ENCODE measurements at regions of chr21 and their contacts with region 1.

Region 1: GRCh38 chr21:42233067-42233961 is 14.4 kb downstream of the ABCG1 start:
- DNase-seq: peak; percentile 76
- H3K4me3 Mint-ChIP-seq: peak overlapping the region; percentile 73
- H3K27ac Mint-ChIP-seq: peak overlapping the region; percentile 92
- H3K4me1 Mint-ChIP-seq: peaks cover 96% of the 10 kb centered on the region
- H3K27me3 Mint-ChIP-seq: no peaks in the 10 kb centered on the region

Region 2: GRCh38 chr21:42009831-42010523 is 223.3 kb before region 1 on chr21 and contains the start of gene ZBTB21:
- intact Hi-C with region 1: loop called (anchors 2 kb)
- DNase-seq: peak; percentile 98
- H3K4me3 Mint-ChIP-seq: peak within 1 kb of the TSS; percentile 90
- H3K27ac Mint-ChIP-seq: peak within 1 kb of the TSS; percentile 99
- H3K4me1 Mint-ChIP-seq: peaks cover 33% of the 10 kb centered on the region
- H3K27me3 Mint-ChIP-seq: peaks cover 23% of the 10 kb centered on the region
- total RNA-seq, gene ZBTB21: 31.8 and 33.8 TPM in 2 replicates

Region 3: DNA sequence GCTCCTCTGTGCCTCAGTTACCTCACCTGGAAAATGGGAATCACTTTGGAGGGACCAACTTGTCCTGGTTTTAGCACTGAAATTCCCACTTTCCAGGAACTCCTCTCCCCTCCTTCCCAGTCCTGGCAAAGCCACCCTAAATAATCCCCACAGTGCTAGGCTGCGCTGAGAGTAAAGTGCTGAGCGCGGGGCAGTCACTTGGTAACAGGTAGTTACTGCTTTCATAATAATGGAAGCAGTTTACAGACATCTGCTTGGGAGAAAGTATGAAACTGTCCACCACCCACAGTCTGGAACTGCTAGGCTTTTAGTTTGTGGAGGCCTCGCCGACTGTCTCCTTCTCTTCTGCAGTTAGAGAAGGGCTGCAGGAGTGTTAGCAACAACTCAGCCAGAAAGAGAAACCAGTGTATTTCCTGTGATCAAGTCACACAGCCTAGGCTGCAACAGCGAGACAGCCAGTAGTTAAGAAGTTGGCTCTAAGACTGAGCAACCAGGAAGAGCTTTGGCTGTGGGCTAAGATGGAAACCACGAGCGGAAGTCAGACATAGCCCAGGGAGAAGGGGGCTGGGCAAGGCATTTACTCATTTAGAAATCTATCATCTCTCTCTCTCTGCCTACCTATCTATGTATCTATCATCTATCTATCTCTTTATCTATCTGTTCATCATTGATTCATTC is 45.2 kb before region 1 on chr21:
- intact Hi-C with region 1: loop called (anchors 1 kb)
- DNase-seq: peak; percentile 81
- H3K4me3 Mint-ChIP-seq: peak overlapping the region; percentile 68
- H3K27ac Mint-ChIP-seq: peak overlapping the region; percentile 89
- H3K4me1 Mint-ChIP-seq: peaks cover 70% of the 10 kb centered on the region
- H3K27me3 Mint-ChIP-seq: no peaks in the 10 kb centered on the region

Region 4: GRCh38 chr21:42220138-42220701 is 13.1 kb before region 1 on chr21:
- intact Hi-C with region 1: loop called (anchors 1 kb)
- DNase-seq: peak; percentile 78
- H3K4me3 Mint-ChIP-seq: peak overlapping the region; percentile 100
- H3K27ac Mint-ChIP-seq: peak overlapping the region; percentile 100
- H3K4me1 Mint-ChIP-seq: peaks cover 36% of the 10 kb centered on the region
- H3K27me3 Mint-ChIP-seq: peaks cover 3% of the 10 kb centered on the region

Region 5: GRCh38 chr21:42414928-42415769 is 181.8 kb after region 1 on chr21:
- intact Hi-C with region 1: loop called (anchors 1 kb)
- DNase-seq: peak; percentile 88
- H3K4me3 Mint-ChIP-seq: peak overlapping the region; percentile 73
- H3K27ac Mint-ChIP-seq: peak overlapping the region; percentile 98
- H3K4me1 Mint-ChIP-seq: peaks cover 66% of the 10 kb centered on the region
- H3K27me3 Mint-ChIP-seq: no peaks in the 10 kb centered on the region

Region 6: DNA sequence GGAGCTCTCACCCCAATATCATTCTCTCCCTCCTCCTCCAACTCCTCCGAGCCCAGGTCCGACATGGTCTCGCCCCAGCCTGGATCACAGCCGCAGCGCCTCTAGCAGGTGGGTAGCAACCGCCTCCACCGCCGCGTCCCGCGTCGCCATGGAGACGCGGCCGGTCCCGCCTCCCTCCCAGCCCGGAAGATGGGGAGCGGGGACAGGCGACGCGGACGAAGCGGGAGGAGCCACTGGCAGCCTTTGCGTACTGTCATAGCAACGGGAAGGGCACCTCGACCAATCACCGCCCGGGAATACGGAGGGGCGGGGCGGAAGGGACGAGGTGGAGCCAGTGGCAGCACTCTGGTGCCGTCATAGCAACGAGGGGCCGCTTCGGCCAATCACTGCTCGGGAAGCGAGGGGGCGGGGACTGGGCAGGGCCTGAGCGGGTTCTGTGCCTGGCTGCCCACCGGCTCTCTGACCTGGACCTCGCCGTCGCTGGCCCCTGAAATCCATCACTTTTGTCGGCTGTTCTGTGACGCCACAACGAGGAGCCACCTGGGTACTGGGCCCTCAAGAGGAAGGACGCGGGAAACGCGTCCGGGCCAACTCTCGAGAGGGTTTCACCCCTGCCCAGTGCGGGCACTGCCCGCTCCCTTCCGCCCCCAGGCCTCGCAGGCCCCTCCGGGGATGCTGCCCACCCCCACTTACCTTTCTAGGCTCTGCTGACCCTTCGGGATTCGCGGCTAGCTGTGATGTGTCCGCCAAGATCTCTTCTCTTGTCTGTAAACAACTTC is 263.0 kb after region 1 on chr21 and contains the start of gene RSPH1:
- intact Hi-C with region 1: loop called (anchors 1 kb)
- DNase-seq: peak; percentile 99
- H3K4me3 Mint-ChIP-seq: peak within 1 kb of the TSS; percentile 92
- H3K27ac Mint-ChIP-seq: peak within 1 kb of the TSS; percentile 83
- H3K4me1 Mint-ChIP-seq: peaks cover 25% of the 10 kb centered on the region
- H3K27me3 Mint-ChIP-seq: peaks cover 6% of the 10 kb centered on the region
- total RNA-seq, gene RSPH1: not detected in 2 replicates

Region 7: DNA sequence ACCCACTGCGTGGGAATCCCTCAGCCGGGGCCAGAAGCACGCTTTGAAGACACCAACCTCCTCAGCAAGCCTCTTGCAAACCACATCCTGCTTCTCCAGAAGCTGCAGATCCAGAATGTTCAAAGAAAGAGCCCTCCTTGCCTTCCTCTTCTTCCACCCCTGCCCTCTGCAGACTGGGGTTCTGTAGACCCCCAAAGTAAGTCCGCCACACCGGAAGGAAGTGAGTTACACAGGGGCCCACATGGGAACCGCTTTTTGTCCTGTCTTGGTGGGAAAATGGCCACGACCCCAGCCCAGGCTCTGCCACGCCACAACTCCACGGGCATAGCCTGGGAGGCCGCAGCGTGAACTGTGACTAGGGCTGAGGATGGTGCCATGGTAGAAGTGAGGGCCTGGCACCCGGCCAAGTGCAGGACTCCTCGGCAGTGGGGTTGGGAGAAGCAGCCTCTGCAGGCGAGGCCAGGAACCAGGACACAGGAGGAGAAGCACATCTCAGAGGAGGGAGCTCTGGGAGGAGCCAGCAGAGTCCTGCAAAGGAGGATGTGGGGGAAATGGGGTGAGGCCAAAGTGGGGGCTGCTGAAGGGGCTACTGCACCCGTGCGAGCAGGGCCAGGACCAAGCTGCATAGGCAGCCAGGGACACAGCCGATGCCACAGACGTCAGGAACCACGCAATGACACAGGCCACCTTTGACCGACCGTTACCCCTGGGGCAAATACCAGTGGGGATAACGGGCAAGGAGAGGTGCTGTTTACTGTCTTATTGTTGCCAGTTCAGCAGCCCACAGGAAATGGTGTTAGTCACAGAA is 451.0 kb after region 1 on chr21:
- intact Hi-C with region 1: loop called (anchors 2 kb)
- DNase-seq: peak; percentile 48
- H3K4me3 Mint-ChIP-seq: peak overlapping the region; percentile 79
- H3K27ac Mint-ChIP-seq: peak overlapping the region; percentile 97
- H3K4me1 Mint-ChIP-seq: peaks cover 43% of the 10 kb centered on the region
- H3K27me3 Mint-ChIP-seq: no peaks in the 10 kb centered on the region